Panc1 (cell line): ENCODE measurements at regions of chr2 and their contacts with region 1.

Region 1: GRCh38 chr2:50401772-50402653 is 629.9 kb downstream of the NRXN1 start:
- DNase-seq: peak; percentile 61
- ATAC-seq: no peak
- H3K4me3 ChIP-seq: no peak overlapping the region
- H3K27ac ChIP-seq: no peak overlapping the region
- H3K4me1 ChIP-seq: no peaks in the 10 kb centered on the region
- H3K27me3 ChIP-seq: no peaks in the 10 kb centered on the region
- CTCF ChIP-seq: peak; percentile 85

Region 2: DNA sequence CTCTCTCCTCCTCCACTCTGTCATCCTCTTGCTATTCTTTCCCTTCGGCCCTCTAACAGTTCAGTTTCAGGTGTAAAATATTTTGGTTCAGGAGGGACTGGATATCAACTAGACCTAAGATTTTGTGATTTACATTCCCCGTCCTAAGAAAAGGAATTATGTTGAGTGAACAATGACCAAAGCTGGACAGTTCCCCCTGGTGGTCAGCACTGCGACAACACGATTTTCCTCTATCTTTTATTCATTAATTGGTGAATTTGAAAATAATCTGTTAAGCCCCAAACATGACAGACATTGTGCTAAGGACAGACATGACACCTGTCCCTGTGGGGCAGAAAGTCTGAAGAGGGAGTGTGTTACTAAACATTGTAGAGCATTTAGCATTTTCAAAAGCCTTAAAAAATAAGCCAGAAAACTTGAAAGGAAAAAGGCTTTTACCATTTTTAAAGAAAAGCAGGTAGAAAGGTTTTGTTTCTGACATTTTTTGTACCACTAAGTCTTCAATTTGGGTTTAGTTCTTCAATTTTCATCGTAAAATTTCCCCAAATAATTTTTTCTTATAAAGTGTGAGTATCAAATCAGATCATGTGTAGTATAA is 1812.7 kb before region 1 on chr2:
- CTCF ChIA-PET with region 1: no interaction called
- POLR2A ChIA-PET with region 1: no interaction called
- in situ Hi-C with region 1: no loop called
- intact Hi-C with region 1: loop called (anchors 10 kb)
- DNase-seq: peak; percentile 35
- ATAC-seq: peak; percentile 70; the same call in 1 of the 2 replicates
- H3K4me3 ChIP-seq: peak overlapping the region in 1 of 2 experiments; percentile 7; a peak in 1 of 4 replicates
- H3K27ac ChIP-seq: no peak overlapping the region
- H3K4me1 ChIP-seq: no peaks in the 10 kb centered on the region
- H3K27me3 ChIP-seq: no peaks in the 10 kb centered on the region
- CTCF ChIP-seq: peak; percentile 79

Region 3: GRCh38 chr2:48824116-48824515 is 1577.9 kb before region 1 on chr2:
- CTCF ChIA-PET with region 1: no interaction called
- POLR2A ChIA-PET with region 1: no interaction called
- in situ Hi-C with region 1: no loop called
- intact Hi-C with region 1: no loop called
- DNase-seq: no peak
- ATAC-seq: no peak
- H3K4me3 ChIP-seq: no peak overlapping the region
- H3K27ac ChIP-seq: no peak overlapping the region
- H3K4me1 ChIP-seq: no peaks in the 10 kb centered on the region
- H3K27me3 ChIP-seq: no peaks in the 10 kb centered on the region
- CTCF ChIP-seq: no peak

Region 4: GRCh38 chr2:48946449-48947048 is 1455.5 kb before region 1 on chr2:
- CTCF ChIA-PET with region 1: no interaction called
- POLR2A ChIA-PET with region 1: no interaction called
- in situ Hi-C with region 1: no loop called
- intact Hi-C with region 1: loop called (anchors 5 kb)
- DNase-seq: peak; percentile 28
- ATAC-seq: peak; percentile 91
- H3K4me3 ChIP-seq: no peak overlapping the region
- H3K27ac ChIP-seq: no peak overlapping the region
- H3K4me1 ChIP-seq: no peaks in the 10 kb centered on the region
- H3K27me3 ChIP-seq: peaks cover 3% of the 10 kb centered on the region; the same call in 1 of the 2 replicates
- CTCF ChIP-seq: peak; percentile 86

Region 5: GRCh38 chr2:49616800-49617199 is 785.2 kb before region 1 on chr2:
- CTCF ChIA-PET with region 1: no interaction called
- POLR2A ChIA-PET with region 1: no interaction called
- in situ Hi-C with region 1: no loop called
- intact Hi-C with region 1: loop called (anchors 1 kb)
- DNase-seq: peak; percentile 20
- ATAC-seq: peak; percentile 78
- H3K4me3 ChIP-seq: no peak overlapping the region
- H3K27ac ChIP-seq: no peak overlapping the region
- H3K4me1 ChIP-seq: no peaks in the 10 kb centered on the region
- H3K27me3 ChIP-seq: no peaks in the 10 kb centered on the region
- CTCF ChIP-seq: peak; percentile 59; the same call in 1 of the 2 replicates

Region 6: GRCh38 chr2:49687918-49688317 is 714.1 kb before region 1 on chr2:
- CTCF ChIA-PET with region 1: no interaction called
- POLR2A ChIA-PET with region 1: no interaction called
- in situ Hi-C with region 1: no loop called
- intact Hi-C with region 1: loop called (anchors 5 kb)
- DNase-seq: no peak
- ATAC-seq: peak; percentile 70; the same call in 1 of the 2 replicates
- H3K4me3 ChIP-seq: no peak overlapping the region
- H3K27ac ChIP-seq: no peak overlapping the region
- H3K4me1 ChIP-seq: no peaks in the 10 kb centered on the region
- H3K27me3 ChIP-seq: no peaks in the 10 kb centered on the region
- CTCF ChIP-seq: peak; percentile 42; the same call in 1 of the 2 replicates

Region 7: GRCh38 chr2:50431958-50432650 is 30.1 kb after region 1 on chr2:
- CTCF ChIA-PET with region 1: no interaction called
- POLR2A ChIA-PET with region 1: no interaction called
- in situ Hi-C with region 1: no loop called
- intact Hi-C with region 1: no loop called
- DNase-seq: no peak
- ATAC-seq: no peak
- H3K4me3 ChIP-seq: no peak overlapping the region
- H3K27ac ChIP-seq: no peak overlapping the region
- H3K4me1 ChIP-seq: no peaks in the 10 kb centered on the region
- H3K27me3 ChIP-seq: no peaks in the 10 kb centered on the region
- CTCF ChIP-seq: no peak